ENCODE measurements at regions of chr19 and their contacts with region 1.

Region 1: GRCh38 chr19:29735800-29736199 is 20.7 kb upstream of the C19orf12 start:
- DNase-seq: no peak
- H3K4me3 ChIP-seq: no peak overlapping the region
- H3K27ac ChIP-seq: no peak overlapping the region
- H3K4me1 ChIP-seq: no peaks in the 10 kb centered on the region
- H3K27me3 ChIP-seq: peaks cover 0 to 19% (median 0%) of the 10 kb centered on the region in 3 donors
- CTCF ChIP-seq: no peak
- EP300 ChIP-seq: no peak
- POLR2A ChIP-seq: no peak

Region 2: GRCh38 chr19:29873024-29873800 is 137.4 kb after region 1 on chr19:
- intact Hi-C with region 1: loop called (anchors 1 kb)
- DNase-seq: no peak
- H3K4me3 ChIP-seq: peak overlapping the region; percentile 16 to 62 (median 45)
- H3K27ac ChIP-seq: no peak overlapping the region
- H3K4me1 ChIP-seq: peaks cover 0 to 36% (median 23%) of the 10 kb centered on the region in 4 donors
- H3K27me3 ChIP-seq: peaks cover 10 to 43% (median 18%) of the 10 kb centered on the region in 3 donors
- CTCF ChIP-seq: peak; percentile 14 to 94 (median 50)
- EP300 ChIP-seq: no peak
- POLR2A ChIP-seq: no peak

Region 3: DNA sequence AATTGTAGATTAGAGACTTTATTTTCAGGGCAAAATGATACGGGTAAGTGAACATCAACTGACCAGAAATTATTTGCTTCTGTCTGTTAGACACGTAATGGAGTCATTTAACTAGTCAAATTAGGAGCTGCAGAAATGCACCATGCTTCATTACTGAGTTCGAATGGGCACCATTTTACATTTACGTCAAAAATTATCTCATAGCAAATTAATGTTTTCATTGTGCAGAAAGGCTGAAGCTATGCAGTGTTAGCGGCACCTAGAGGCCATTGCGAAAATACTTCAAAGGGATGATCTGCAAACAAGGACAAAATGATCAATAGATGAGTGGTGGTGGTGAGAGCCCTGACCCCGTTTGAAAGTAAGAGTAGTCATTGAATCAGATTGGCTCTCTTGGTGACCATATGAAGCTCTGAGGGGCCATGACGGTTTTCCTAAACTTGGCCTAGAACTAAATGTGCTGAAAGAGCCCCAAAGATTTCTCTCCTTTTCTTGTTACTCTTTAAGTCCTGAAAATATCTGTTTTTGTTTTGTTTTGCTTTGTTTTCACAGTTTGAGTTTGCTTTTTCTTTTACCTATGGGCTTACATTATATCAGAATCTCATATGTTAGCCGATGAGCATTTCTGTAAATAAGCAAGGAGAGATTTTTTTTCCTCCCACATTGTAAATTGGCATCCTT is 914.3 kb after region 1 on chr19:
- intact Hi-C with region 1: loop called (anchors 10 kb)
- DNase-seq: no peak
- H3K4me3 ChIP-seq: no peak overlapping the region
- H3K27ac ChIP-seq: no peak overlapping the region
- H3K4me1 ChIP-seq: no peaks in the 10 kb centered on the region
- H3K27me3 ChIP-seq: peaks cover 0 to 58% (median 4%) of the 10 kb centered on the region in 3 donors
- CTCF ChIP-seq: peak; percentile 28 to 69 (median 58)
- EP300 ChIP-seq: no peak
- POLR2A ChIP-seq: no peak